CD4-positive, alpha-beta memory T cell (primary cell): ENCODE measurements at regions of chr11 and their contacts with region 1.

Region 1: GRCh38 chr11:59142530-59143507 is at the start of gene FAM111A:
- DNase-seq: peak; percentile 89 to 94 (median 90)
- H3K4me3 ChIP-seq: peak within 1 kb of the TSS; percentile 86 to 92
- H3K4me3 Mint-ChIP-seq: peak within 1 kb of the TSS; percentile 94 to 98 (median 97)
- H3K27ac ChIP-seq: peak within 1 kb of the TSS; percentile 87
- H3K27ac Mint-ChIP-seq: peak within 1 kb of the TSS; percentile 96 to 99 (median 98)
- H3K4me1 ChIP-seq: peaks cover 46% of the 10 kb centered on the region
- H3K4me1 Mint-ChIP-seq: peaks cover 39 to 60% (median 43%) of the 10 kb centered on the region in 4 donors
- H3K27me3 ChIP-seq: no peaks in the 10 kb centered on the region
- H3K27me3 Mint-ChIP-seq: no peaks in the 10 kb centered on the region
- total RNA-seq, gene FAM111A: 128 to 130 TPM

Region 2: GRCh38 chr11:57712256-57713150 is 1430.3 kb before region 1 on chr11 and contains the start of gene TMX2:
- CTCF ChIA-PET with region 1: no interaction called
- POLR2A ChIA-PET with region 1: no interaction called
- intact Hi-C with region 1: loop called (anchors 5 kb)
- DNase-seq: peak; percentile 89 to 97 (median 94)
- H3K4me3 ChIP-seq: peak within 1 kb of the TSS; percentile 92 to 96
- H3K4me3 Mint-ChIP-seq: peak within 1 kb of the TSS; percentile 93 to 99 (median 98)
- H3K27ac ChIP-seq: peak within 1 kb of the TSS; percentile 96
- H3K27ac Mint-ChIP-seq: peak within 1 kb of the TSS; percentile 91 to 99 (median 98)
- H3K4me1 ChIP-seq: peaks cover 34% of the 10 kb centered on the region
- H3K4me1 Mint-ChIP-seq: peaks cover 30 to 64% (median 43%) of the 10 kb centered on the region in 4 donors
- H3K27me3 ChIP-seq: no peaks in the 10 kb centered on the region
- H3K27me3 Mint-ChIP-seq: no peaks in the 10 kb centered on the region
- total RNA-seq, gene TMX2: 63.6 to 67.1 TPM

Region 3: GRCh38 chr11:59053387-59053786 is 89.4 kb before region 1 on chr11:
- CTCF ChIA-PET with region 1: interaction called, 10 read pairs
- POLR2A ChIA-PET with region 1: no interaction called
- intact Hi-C with region 1: no loop called
- DNase-seq: peak; percentile 63 to 77 (median 71)
- H3K4me3 ChIP-seq: no peak overlapping the region
- H3K4me3 Mint-ChIP-seq: no peak overlapping the region
- H3K27ac ChIP-seq: no peak overlapping the region
- H3K27ac Mint-ChIP-seq: no peak overlapping the region
- H3K4me1 ChIP-seq: peaks cover 6% of the 10 kb centered on the region
- H3K4me1 Mint-ChIP-seq: peaks cover 4 to 7% (median 5%) of the 10 kb centered on the region in 4 donors
- H3K27me3 ChIP-seq: no peaks in the 10 kb centered on the region
- H3K27me3 Mint-ChIP-seq: peaks cover 14 to 25% of the 10 kb centered on the region in 2 donors

Region 4: DNA sequence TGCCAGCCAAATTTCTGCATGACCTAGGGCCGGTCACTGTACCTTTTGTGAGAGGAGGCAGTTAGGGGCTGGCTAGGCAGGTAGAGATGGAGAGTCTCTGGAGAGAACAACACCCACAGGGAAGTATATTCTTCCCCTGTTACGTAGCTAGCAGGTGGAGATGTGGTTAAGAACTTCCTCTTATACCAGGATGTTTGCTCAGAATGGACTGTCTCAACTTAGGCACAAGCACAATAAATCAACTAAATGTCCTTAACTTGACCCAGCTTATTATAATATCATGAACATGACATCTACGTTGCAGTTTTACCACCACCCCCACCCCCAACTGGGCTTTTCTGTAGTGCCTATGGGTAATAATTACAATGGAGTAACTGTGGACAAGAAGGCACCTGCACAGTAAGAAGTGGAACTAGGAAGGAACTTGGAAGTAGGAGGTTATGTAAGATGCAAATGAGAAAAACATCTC is 130.6 kb after region 1 on chr11:
- CTCF ChIA-PET with region 1: no interaction called
- POLR2A ChIA-PET with region 1: interaction called, 10 read pairs
- intact Hi-C with region 1: no loop called
- DNase-seq: peak in 4 of 5 donors; percentile 10 to 37 (median 30)
- H3K4me3 ChIP-seq: no peak overlapping the region
- H3K4me3 Mint-ChIP-seq: peak overlapping the region in 7 of 8 donors; percentile 32 to 79 (median 67)
- H3K27ac ChIP-seq: peak overlapping the region; percentile 0
- H3K27ac Mint-ChIP-seq: peak overlapping the region; percentile 36 to 93 (median 85)
- H3K4me1 ChIP-seq: peaks cover 24% of the 10 kb centered on the region
- H3K4me1 Mint-ChIP-seq: peaks cover 19 to 53% (median 41%) of the 10 kb centered on the region in 4 donors
- H3K27me3 ChIP-seq: no peaks in the 10 kb centered on the region
- H3K27me3 Mint-ChIP-seq: no peaks in the 10 kb centered on the region

Region 5: DNA sequence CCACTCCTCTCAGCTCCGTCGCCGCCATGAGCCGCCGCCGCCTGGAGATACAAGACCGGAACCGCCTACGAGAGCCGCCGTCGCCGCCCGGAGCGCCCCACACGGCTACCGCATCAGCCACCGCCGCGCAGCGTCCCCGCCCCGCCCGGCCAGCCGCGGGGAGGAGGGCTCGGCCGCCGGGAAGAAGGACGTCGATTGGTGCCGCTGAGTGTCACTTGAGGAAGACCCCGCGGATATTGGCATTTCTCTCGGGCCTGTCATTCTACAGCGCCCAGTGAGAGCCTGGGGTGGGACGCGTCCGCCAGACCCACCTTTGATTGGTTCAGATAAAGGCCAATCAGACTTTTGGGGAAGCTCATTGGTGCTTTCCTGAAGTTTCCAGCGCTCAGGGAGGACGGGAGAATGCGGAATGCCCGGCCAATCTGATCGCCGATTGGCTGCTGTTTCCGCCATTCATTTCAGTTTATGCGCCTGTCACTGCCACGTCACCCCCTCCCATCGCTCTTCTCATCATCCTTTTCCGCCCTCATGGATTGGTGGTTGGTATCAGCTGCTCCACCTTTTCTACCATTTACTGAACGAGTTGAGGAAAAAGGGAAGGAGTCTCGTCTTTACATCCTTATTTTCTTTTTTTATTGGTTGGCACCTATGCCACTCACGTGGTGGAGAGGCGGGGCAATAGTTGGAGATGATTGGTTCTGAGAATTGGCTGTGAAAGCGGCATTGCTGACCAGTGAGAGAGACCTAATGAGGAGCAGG is 473.0 kb after region 1 on chr11 and contains the start of gene OSBP:
- CTCF ChIA-PET with region 1: no interaction called
- POLR2A ChIA-PET with region 1: no interaction called
- intact Hi-C with region 1: loop called (anchors 5 kb)
- DNase-seq: peak; percentile 98 to 100 (median 100)
- H3K4me3 ChIP-seq: peak within 1 kb of the TSS; percentile 84 to 86
- H3K4me3 Mint-ChIP-seq: peak within 1 kb of the TSS; percentile 93 to 99 (median 96)
- H3K27ac ChIP-seq: peak within 1 kb of the TSS; percentile 95
- H3K27ac Mint-ChIP-seq: peak within 1 kb of the TSS; percentile 83 to 99 (median 98)
- H3K4me1 ChIP-seq: peaks cover 48% of the 10 kb centered on the region
- H3K4me1 Mint-ChIP-seq: peaks cover 29 to 53% (median 42%) of the 10 kb centered on the region in 4 donors
- H3K27me3 ChIP-seq: no peaks in the 10 kb centered on the region
- H3K27me3 Mint-ChIP-seq: no peaks in the 10 kb centered on the region
- total RNA-seq, gene OSBP: 55.3 to 55.6 TPM